ENCODE measurements at regions of chr22 and their contacts with region 1.

Region 1: DNA sequence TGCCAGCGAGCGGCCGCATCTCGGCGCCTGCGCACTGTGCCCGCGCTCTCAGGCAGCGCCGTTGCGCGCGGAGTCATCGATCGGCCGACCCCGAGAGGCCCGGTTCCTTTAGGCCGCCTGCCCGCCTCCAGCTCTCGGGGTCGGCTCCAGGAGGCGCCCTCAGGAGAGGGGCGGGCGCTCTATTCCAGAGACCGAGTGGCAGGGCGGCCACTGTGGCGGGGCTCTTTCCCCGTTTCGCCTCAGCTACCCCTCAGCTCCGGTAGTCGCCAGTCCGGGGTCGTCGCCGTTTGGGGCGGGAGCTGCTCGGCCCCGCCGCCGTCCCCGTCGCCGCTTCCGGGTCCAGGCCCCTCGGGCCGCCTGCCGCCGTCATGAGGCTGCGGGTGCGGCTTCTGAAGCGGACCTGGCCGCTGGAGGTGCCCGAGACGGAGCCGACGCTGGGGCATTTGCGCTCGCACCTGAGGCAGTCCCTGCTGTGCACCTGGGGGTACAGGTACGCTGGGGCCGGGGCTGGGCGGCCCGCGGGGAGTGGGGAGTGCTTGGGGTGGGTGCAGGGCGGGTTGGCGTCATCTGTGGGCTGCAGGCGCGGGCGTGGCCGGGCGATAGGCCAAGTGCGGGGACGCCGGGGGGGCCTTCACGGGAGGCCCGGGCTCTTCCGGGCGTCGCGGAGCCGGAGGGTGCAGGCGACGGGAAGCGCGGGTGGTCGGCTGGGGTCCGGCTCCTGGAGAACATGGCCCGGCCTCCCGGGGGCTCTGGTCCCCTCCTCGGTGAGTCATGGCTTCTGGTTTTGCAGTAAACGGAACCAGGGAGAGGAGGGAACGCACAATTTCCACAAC is at the start of gene FBXO7:
- DNase-seq: peak; percentile 80 to 89 (median 85)
- ATAC-seq: peak; percentile 91
- H3K4me3 ChIP-seq: peak within 1 kb of the TSS; percentile 77
- H3K4me3 Mint-ChIP-seq: peak within 1 kb of the TSS in 9 of 10 donors; percentile 88 to 98 (median 96)
- H3K27ac ChIP-seq: peak within 1 kb of the TSS; percentile 97
- H3K27ac Mint-ChIP-seq: peak within 1 kb of the TSS; percentile 88 to 97 (median 93)
- H3K4me1 ChIP-seq: peaks cover 24 to 27% of the 10 kb centered on the region in 2 donors
- H3K4me1 Mint-ChIP-seq: peaks cover 11 to 34% (median 22%) of the 10 kb centered on the region in 7 donors
- H3K27me3 ChIP-seq: no peaks in the 10 kb centered on the region
- H3K27me3 Mint-ChIP-seq: peaks cover 0 to 4% (median 0%) of the 10 kb centered on the region in 5 donors
- total RNA-seq, gene FBXO7: 86.4 to 120 (median 98.2) TPM

Region 2: DNA sequence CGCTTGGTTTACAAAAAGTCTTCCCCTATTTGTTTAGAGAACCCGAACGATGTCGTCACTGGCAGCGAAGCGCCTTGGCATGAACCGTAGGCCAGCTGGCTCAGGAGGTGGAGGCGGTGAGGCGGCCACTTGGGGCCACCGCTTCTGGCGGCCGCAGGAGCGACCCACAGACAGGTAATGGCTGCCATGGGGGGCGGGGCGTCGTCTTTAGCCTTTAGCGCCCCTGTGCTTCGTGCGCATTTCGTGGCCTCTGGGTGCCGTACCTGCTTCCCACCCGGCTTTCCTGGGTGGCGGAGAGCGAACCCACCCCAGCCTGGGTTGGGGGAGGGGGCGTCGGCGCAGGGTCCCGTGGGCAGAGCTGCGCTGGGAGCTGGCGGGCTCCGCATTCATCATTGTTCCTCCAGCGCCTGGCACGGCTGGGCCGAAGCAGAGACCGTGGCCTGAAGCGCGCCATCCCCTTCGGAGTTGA is 1780.6 kb before region 1 on chr22:
- CTCF ChIA-PET with region 1: no interaction called
- POLR2A ChIA-PET with region 1: no interaction called
- intact Hi-C with region 1: loop called in 1 of 2 experiments (anchors 10 kb)
- DNase-seq: peak; percentile 40 to 62 (median 50)
- ATAC-seq: peak; percentile 83
- H3K4me3 ChIP-seq: peak overlapping the region; percentile 77
- H3K4me3 Mint-ChIP-seq: peak overlapping the region; percentile 86 to 98 (median 94)
- H3K27ac ChIP-seq: peak overlapping the region; percentile 57
- H3K27ac Mint-ChIP-seq: peak overlapping the region in 8 of 9 donors; percentile 59 to 92 (median 86)
- H3K4me1 ChIP-seq: peaks cover 6 to 7% of the 10 kb centered on the region in 2 donors
- H3K4me1 Mint-ChIP-seq: peaks cover 0 to 29% (median 19%) of the 10 kb centered on the region in 7 donors
- H3K27me3 ChIP-seq: no peaks in the 10 kb centered on the region
- H3K27me3 Mint-ChIP-seq: peaks cover 0 to 38% (median 4%) of the 10 kb centered on the region in 5 donors

Region 3: DNA sequence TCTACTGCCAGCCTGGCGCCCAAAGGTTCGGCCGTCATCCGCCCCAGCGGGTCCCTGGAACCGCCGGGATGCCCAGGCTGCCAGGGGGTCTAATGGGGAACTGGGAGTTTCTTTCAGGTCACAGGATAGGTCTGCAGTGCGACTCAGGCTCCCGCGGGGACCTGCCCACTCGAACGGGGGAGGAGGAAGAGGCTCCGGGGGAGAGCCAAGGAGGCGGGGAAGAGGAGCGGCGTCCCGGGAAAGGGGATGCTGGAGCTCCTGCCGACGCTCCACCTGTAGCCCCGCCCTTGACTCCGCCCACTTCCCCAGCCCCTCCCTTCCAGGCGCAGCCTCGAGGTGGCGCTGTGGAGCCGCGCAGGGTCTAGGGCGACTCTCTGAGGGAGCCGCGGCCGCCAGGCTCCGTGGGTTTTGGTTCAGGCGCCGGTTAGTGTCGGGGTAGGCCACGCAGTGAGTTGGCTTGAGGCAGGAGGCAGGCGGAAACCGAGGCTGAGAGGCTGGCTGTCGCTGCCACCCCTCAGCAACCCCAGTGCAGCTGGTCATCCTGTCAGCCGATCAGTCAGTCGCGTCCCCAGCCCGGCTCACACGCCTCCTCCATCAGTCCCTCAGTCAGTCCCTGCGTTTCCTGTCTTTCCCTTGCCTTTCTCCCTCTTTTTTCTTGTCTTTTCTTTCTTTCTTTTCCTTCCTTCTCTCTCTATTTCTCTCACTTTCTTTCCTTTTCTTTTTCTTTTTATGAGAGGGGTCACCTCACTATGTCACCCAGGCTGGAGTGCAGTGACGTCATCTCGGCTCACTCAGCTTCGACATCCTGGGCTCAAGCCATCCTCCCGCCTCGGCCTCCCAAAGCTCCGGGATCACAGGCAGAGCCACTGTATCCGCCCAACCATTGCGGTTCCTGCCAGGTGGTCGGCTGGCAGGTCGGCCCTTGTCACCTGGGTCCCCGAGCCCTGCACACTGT is 504.1 kb before region 1 on chr22:
- CTCF ChIA-PET with region 1: interaction called, 3 read pairs
- POLR2A ChIA-PET with region 1: no interaction called
- intact Hi-C with region 1: loop called in 1 of 2 experiments (anchors 2 kb)
- DNase-seq: peak; percentile 69 to 97 (median 86)
- ATAC-seq: peak; percentile 99
- H3K4me3 ChIP-seq: peak overlapping the region; percentile 70
- H3K4me3 Mint-ChIP-seq: peak overlapping the region; percentile 72 to 87 (median 82)
- H3K27ac ChIP-seq: peak overlapping the region; percentile 37
- H3K27ac Mint-ChIP-seq: peak overlapping the region in 7 of 9 donors; percentile 19 to 75 (median 62)
- H3K4me1 ChIP-seq: peaks cover 8 to 10% of the 10 kb centered on the region in 2 donors
- H3K4me1 Mint-ChIP-seq: peaks cover 9 to 18% (median 13%) of the 10 kb centered on the region in 7 donors
- H3K27me3 ChIP-seq: no peaks in the 10 kb centered on the region
- H3K27me3 Mint-ChIP-seq: peaks cover 0 to 2% (median 0%) of the 10 kb centered on the region in 5 donors

Region 4: GRCh38 chr22:32103658-32104315 is 371.1 kb before region 1 on chr22:
- CTCF ChIA-PET with region 1: interaction called, 4 read pairs
- POLR2A ChIA-PET with region 1: interaction called, 3 read pairs
- intact Hi-C with region 1: loop called (anchors 1 to 5 kb)
- DNase-seq: peak in 5 of 9 donors; percentile 11 to 34 (median 23)
- ATAC-seq: no peak
- H3K4me3 ChIP-seq: no peak overlapping the region
- H3K4me3 Mint-ChIP-seq: no peak overlapping the region
- H3K27ac ChIP-seq: no peak overlapping the region
- H3K27ac Mint-ChIP-seq: no peak overlapping the region
- H3K4me1 ChIP-seq: no peaks in the 10 kb centered on the region
- H3K4me1 Mint-ChIP-seq: no peaks in the 10 kb centered on the region
- H3K27me3 ChIP-seq: no peaks in the 10 kb centered on the region
- H3K27me3 Mint-ChIP-seq: peaks cover 12 to 44% (median 28%) of the 10 kb centered on the region in 5 donors

Region 5: GRCh38 chr22:32202539-32203180 is 272.2 kb before region 1 on chr22:
- CTCF ChIA-PET with region 1: interaction called, 4 read pairs
- POLR2A ChIA-PET with region 1: no interaction called
- intact Hi-C with region 1: loop called (anchors 1 to 2 kb)
- DNase-seq: peak in 5 of 9 donors; percentile 7 to 24 (median 20)
- ATAC-seq: peak; percentile 43
- H3K4me3 ChIP-seq: peak overlapping the region; percentile 57
- H3K4me3 Mint-ChIP-seq: peak overlapping the region; percentile 19 to 91 (median 84)
- H3K27ac ChIP-seq: no peak overlapping the region
- H3K27ac Mint-ChIP-seq: peak overlapping the region in 3 of 9 donors; percentile 14 to 34 (median 17)
- H3K4me1 ChIP-seq: peaks cover 12 to 30% of the 10 kb centered on the region in 2 donors
- H3K4me1 Mint-ChIP-seq: peaks cover 20 to 74% (median 49%) of the 10 kb centered on the region in 7 donors
- H3K27me3 ChIP-seq: no peaks in the 10 kb centered on the region
- H3K27me3 Mint-ChIP-seq: peaks cover 0 to 21% (median 6%) of the 10 kb centered on the region in 5 donors

Region 6: GRCh38 chr22:32411829-32412592 is 62.8 kb before region 1 on chr22 and contains the start of gene RTCB:
- CTCF ChIA-PET with region 1: interaction called, 5 read pairs
- POLR2A ChIA-PET with region 1: interaction called, 26 read pairs
- intact Hi-C with region 1: loop called (anchors 1 kb)
- DNase-seq: peak; percentile 86 to 93 (median 90)
- ATAC-seq: peak; percentile 94
- H3K4me3 ChIP-seq: peak within 1 kb of the TSS; percentile 89
- H3K4me3 Mint-ChIP-seq: peak within 1 kb of the TSS; percentile 96 to 99 (median 98)
- H3K27ac ChIP-seq: peak within 1 kb of the TSS; percentile 92
- H3K27ac Mint-ChIP-seq: peak within 1 kb of the TSS; percentile 90 to 98 (median 96)
- H3K4me1 ChIP-seq: peaks cover 12 to 14% of the 10 kb centered on the region in 2 donors
- H3K4me1 Mint-ChIP-seq: peaks cover 22 to 62% (median 58%) of the 10 kb centered on the region in 7 donors
- H3K27me3 ChIP-seq: no peaks in the 10 kb centered on the region
- H3K27me3 Mint-ChIP-seq: peaks cover 0 to 11% (median 0%) of the 10 kb centered on the region in 5 donors
- total RNA-seq, gene RTCB: 41.6 to 59.7 (median 54.6) TPM

Measured in naive thymus-derived CD4-positive, alpha-beta T cell (primary cell).